Heart right ventricle (tissue), 16 donors: ENCODE measurements at regions of chr12 and their contacts with region 1.

Region 1: GRCh38 chr12:52278541-52279421 is 4.3 kb downstream of the KRT86 start:
- DNase-seq: peak; percentile 62 to 82
- ATAC-seq: peak; percentile 88 to 96 (median 92)
- H3K4me3 ChIP-seq: no peak overlapping the region
- H3K27ac ChIP-seq: no peak overlapping the region
- H3K4me1 ChIP-seq: peaks cover 0 to 32% (median 10%) of the 10 kb centered on the region in 9 donors
- H3K27me3 ChIP-seq: peaks cover 0 to 49% (median 24%) of the 10 kb centered on the region in 7 donors
- CTCF ChIP-seq: peak; percentile 91 to 99 (median 98)

Region 2: GRCh38 chr12:52121824-52122539 is 156.8 kb before region 1 on chr12:
- intact Hi-C with region 1: no loop called
- DNase-seq: peak; percentile 65 to 77
- ATAC-seq: peak in 7 of 8 donors; percentile 13 to 54 (median 28)
- H3K4me3 ChIP-seq: no peak overlapping the region
- H3K27ac ChIP-seq: no peak overlapping the region
- H3K4me1 ChIP-seq: peaks cover 14 to 35% (median 25%) of the 10 kb centered on the region in 9 donors
- H3K27me3 ChIP-seq: peaks cover 0 to 29% (median 14%) of the 10 kb centered on the region in 7 donors
- CTCF ChIP-seq: peak; percentile 67 to 85 (median 81)

Region 3: DNA sequence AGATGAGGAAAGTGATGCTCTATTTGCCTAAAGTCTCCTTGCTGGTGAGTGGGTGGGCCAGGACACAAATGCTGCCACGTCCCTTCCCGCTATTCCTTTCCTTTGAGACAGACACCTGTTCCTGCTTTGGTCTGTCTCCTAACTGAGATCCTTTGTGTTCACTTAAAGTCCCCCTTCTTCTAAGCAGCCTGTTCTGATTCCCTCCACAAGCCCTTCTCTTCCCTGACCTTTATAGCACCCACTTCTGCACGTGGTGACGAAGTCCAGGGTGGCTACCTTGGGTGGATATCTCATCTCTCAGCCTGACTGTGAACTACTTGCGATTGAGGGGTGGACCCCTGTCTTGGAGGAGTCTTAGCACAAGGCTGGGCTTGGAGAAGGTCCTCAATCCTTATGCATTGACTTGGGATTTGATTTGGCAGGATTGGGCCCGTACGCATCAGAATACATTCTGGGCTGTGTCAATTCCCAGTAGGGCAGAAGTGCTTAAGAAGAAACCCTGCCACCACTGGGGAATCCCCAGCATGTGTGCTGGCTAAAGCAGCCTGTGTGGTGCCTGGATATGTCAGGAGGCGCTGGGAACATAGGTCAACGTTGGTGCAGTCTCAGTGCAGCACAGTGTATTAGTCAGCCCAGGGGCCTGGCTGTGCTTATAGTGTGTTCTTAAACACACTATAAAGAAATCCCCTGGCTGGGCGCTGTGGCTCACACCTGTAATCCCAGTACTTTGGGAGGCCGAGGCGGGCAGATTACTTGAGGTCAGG is 110.6 kb before region 1 on chr12:
- intact Hi-C with region 1: loop called in 1 of 10 experiments (anchors 5 kb)
- DNase-seq: peak in 1 of 2 donors; percentile 37
- ATAC-seq: peak; percentile 26 to 82 (median 68)
- H3K4me3 ChIP-seq: no peak overlapping the region
- H3K27ac ChIP-seq: no peak overlapping the region
- H3K4me1 ChIP-seq: peaks cover 0 to 20% (median 8%) of the 10 kb centered on the region in 9 donors
- H3K27me3 ChIP-seq: no peaks in the 10 kb centered on the region
- CTCF ChIP-seq: no peak

Region 4: DNA sequence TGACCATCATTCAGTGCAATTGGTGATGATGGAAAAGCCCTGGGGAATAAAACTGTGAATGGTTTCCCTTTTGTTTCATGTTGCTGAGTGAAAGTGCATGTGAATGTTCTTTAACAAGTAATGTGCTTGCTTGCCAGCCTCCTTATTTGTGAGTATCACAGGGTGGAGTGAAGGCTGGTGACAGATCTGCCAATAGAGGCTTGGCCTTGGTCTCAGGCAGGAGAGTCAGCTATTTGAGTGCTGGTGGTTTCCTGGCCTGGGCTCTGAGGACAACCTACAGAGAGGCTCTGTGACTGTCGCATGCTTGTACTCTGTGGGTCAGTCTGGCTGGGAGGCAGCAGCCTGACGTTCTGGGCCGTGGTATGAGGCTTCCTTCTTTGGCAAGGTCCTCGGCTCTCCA is 67.8 kb after region 1 on chr12:
- intact Hi-C with region 1: no loop called
- DNase-seq: peak in 1 of 2 donors; percentile 24
- ATAC-seq: peak; percentile 59 to 84 (median 70)
- H3K4me3 ChIP-seq: no peak overlapping the region
- H3K27ac ChIP-seq: no peak overlapping the region
- H3K4me1 ChIP-seq: peaks cover 0 to 13% (median 4%) of the 10 kb centered on the region in 9 donors
- H3K27me3 ChIP-seq: peaks cover 0 to 7% (median 0%) of the 10 kb centered on the region in 7 donors
- CTCF ChIP-seq: no peak